Activated CD4-positive, alpha-beta T cell treated with anti-CD3 and anti-CD28 coated beads, Interleukin-2, amount 10 ng/mL, durations not matched to agents 24 days and 14 days (primary cell): ENCODE measurements at regions of chr5 and their contacts with region 1.

Region 1: DNA sequence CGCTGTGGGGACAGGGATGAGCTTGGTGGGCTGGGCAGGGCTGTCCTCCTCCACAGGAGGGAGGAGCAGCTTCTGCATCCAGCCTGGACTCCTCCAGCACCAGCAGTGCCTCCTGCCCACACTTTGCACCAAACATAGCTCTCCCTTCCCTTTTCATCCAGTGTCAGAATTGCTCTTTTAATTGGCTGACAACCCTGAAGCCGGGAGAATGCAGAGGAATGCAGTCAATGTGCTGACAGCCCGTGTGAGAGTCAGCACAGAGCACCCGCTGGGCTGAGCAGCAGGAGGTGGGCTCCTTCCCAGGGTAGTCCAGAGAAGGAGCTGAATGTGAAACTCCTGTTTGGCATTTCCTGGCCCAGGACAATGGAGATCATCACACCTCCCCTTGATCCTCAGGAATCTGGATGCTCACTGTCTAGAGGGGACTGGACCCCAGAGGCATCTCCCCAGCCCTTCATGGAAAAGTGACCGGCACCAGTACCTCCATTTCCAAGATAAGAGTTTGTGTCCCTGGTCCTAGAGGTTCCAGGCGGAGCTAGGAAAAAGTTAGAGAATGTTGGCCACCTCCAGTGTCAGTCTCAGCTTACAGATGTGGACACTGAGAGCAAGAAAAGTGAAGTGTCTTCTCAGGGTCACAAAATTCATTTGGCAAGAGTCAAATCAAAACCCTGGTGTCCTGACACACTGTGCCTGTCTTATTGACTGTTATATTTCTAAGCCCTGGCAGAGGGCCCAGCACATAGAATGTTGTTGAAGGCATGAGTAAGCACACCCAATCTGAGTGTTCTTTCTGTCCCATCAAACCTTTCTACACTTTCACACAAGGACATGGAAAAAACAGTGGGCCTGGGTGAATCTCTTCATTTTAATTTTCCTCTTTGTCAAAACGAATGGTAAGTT is 202.1 kb downstream of the SNX18 start:
- DNase-seq: no peak
- H3K4me3 Mint-ChIP-seq: no peak overlapping the region
- H3K27ac Mint-ChIP-seq: peak overlapping the region; percentile 54
- H3K4me1 Mint-ChIP-seq: peaks cover 25% of the 10 kb centered on the region
- H3K27me3 Mint-ChIP-seq: peaks cover 2% of the 10 kb centered on the region

Region 2: DNA sequence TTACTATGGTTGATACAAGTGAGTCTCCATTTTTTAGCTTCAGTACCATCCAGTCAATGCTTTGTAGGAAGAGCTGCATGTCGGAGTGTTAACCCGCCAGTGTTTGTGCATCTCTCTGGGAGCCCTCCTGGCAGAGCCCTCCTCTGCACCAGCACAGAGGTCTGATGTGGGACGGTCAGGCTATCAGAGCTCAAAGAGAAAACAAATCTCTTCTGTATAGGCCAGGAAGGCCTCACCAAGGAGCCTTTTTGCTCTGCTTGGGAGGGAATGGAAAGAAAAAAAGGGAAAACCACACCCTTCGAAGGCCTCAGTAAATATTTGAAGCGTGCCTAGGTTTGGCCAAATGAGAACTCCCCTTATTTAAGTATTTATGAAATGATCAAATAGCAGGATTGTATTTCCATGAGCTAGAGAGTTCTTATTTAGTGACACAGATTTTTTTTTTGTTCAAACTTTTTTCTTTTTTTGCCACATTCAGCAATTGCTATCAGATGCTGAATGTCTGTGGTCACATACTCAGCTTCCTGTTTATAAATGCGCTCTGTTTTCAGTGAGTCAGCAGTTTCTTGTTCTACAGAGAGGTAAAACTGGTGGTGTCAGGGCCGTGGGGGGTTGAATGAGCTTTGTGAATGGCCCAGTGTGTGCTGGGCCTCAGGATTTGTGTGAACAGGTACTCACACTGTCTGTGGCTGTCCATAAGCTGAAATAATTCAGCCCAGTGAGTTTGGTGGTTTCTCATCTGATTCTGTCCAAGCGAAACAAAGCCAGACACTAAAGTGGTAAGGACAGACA is 24.6 kb after region 1 on chr5:
- intact Hi-C with region 1: loop called (anchors 1 kb)
- DNase-seq: peak; percentile 88
- H3K4me3 Mint-ChIP-seq: peak overlapping the region; percentile 57
- H3K27ac Mint-ChIP-seq: peak overlapping the region; percentile 77
- H3K4me1 Mint-ChIP-seq: peaks cover 44% of the 10 kb centered on the region
- H3K27me3 Mint-ChIP-seq: peaks cover 4% of the 10 kb centered on the region

Region 3: DNA sequence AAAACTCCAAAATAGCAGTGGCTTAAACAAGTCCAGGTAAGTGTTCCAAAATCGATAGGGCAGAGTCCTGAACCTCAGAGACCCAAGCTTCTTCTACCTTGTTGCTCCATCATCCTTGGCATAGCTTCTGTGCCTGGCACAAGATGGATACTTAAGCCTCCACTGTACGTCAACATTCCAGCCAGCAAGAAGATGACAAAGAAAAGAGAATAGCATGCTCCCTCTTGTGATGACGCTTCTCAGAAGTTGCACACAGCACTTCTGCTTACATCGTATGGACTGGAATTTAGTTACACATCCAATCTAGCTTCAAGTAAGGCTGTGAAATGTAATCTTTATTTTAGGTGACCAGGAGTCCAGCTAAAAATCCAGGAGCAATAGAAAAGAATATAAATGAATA is 38.4 kb after region 1 on chr5:
- intact Hi-C with region 1: loop called (anchors 5 kb)
- DNase-seq: no peak
- H3K4me3 Mint-ChIP-seq: no peak overlapping the region
- H3K27ac Mint-ChIP-seq: no peak overlapping the region
- H3K4me1 Mint-ChIP-seq: peaks cover 27% of the 10 kb centered on the region
- H3K27me3 Mint-ChIP-seq: peaks cover 2% of the 10 kb centered on the region

Region 4: DNA sequence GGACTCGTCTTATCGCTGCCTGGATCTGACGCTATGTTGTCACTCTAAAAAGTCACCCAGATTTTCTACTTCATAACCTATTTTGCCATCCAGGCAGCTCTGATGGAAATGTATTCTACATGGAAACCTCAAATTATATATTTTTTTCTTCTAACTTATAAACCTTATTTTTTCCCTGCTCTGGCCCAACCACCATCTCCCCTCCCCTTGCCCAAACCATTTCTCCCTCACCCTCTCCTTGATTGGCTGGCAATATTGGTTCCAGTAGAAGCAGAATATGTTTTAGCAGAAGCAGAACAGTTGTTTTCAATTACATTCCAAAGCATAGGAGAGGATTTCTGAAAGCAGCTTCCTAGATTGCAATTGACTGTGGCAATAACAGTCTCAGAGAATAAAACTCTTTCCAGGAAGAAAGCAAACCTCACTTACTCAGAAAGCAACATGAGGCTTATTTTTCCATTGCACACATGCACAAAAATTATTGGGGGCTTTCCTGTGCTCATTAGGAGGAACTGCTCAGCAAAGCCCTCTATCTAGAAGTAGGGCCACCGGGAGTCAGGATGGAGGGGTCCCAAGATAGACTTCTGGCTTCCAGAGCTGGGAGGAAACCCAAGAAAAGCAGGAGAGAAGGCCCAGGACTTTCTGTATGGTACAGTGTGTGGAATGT is 74.0 kb after region 1 on chr5:
- intact Hi-C with region 1: loop called (anchors 1 kb)
- DNase-seq: peak; percentile 66
- H3K4me3 Mint-ChIP-seq: peak overlapping the region; percentile 43
- H3K27ac Mint-ChIP-seq: peak overlapping the region; percentile 88
- H3K4me1 Mint-ChIP-seq: peaks cover 34% of the 10 kb centered on the region
- H3K27me3 Mint-ChIP-seq: peaks cover 16% of the 10 kb centered on the region

Region 5: DNA sequence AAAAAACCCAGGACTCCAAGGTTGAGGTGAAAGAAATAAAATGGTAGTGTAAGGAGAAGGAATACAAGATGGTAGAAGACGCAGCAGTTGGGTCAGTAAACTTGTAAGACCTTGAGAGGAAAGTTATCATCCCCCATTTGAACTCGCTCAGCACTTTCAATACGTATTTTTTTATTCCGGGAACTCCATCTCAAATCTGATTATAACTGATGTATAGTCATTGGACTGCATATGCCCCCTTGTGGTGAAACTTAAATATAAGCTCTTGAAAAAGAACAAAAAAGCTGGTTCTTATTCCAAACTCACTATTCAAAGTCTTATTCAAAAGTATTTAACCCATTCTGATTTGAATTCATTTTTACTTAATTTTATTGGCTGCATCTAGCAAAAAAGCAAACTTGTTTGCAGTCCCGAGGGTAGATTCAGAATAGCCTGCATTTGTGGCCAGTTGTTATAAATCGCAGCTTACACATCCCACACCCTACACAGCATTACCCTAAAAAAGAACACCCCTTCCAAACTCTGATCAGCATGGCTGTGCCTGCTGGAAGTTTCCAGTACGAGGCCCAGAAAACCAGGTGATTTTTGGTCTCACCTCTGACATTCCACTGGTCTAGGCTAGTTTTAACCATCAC is 147.8 kb after region 1 on chr5:
- intact Hi-C with region 1: loop called (anchors 5 kb)
- DNase-seq: peak; percentile 67
- H3K4me3 Mint-ChIP-seq: no peak overlapping the region
- H3K27ac Mint-ChIP-seq: no peak overlapping the region
- H3K4me1 Mint-ChIP-seq: peaks cover 22% of the 10 kb centered on the region
- H3K27me3 Mint-ChIP-seq: peaks cover 65% of the 10 kb centered on the region